CD8-positive, alpha-beta T cell (primary cell): ENCODE measurements at regions of chr3 and their contacts with region 1.

Region 1: GRCh38 chr3:103067963-103068362 is 633.1 kb downstream of the ZPLD1 start:
- DNase-seq: no peak
- ATAC-seq: no peak
- H3K4me3 ChIP-seq: no peak overlapping the region
- H3K4me3 Mint-ChIP-seq: no peak overlapping the region
- H3K27ac ChIP-seq: no peak overlapping the region
- H3K27ac Mint-ChIP-seq: no peak overlapping the region
- H3K4me1 ChIP-seq: no peaks in the 10 kb centered on the region
- H3K4me1 Mint-ChIP-seq: no peaks in the 10 kb centered on the region
- H3K27me3 ChIP-seq: no peaks in the 10 kb centered on the region
- H3K27me3 Mint-ChIP-seq: no peaks in the 10 kb centered on the region
- CTCF ChIP-seq: no peak

Region 2: DNA sequence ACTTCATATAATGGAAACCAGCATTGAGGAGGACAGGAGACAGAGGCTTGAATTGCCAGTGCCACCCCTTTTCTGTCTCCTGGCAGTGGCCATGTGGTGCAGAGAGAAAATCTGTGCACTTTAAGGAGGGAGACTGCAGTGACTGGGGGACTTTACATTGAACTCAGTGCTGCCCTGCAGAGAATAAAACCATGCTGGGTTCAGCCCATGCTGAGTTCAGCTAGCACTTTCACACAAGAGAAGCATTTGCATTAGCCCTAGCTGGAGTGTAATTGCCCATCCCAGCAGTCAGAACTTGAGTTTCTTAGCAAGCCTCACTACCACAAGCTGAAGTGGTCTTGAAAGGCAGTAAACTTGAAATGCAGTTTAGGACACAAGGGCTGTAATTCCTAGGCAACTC is 44.3 kb after region 1 on chr3:
- CTCF ChIA-PET with region 1: no interaction called
- POLR2A ChIA-PET with region 1: no interaction called
- intact Hi-C with region 1: no loop called
- DNase-seq: no peak
- ATAC-seq: no peak
- H3K4me3 ChIP-seq: no peak overlapping the region
- H3K4me3 Mint-ChIP-seq: no peak overlapping the region
- H3K27ac ChIP-seq: no peak overlapping the region
- H3K27ac Mint-ChIP-seq: no peak overlapping the region
- H3K4me1 ChIP-seq: no peaks in the 10 kb centered on the region
- H3K4me1 Mint-ChIP-seq: no peaks in the 10 kb centered on the region
- H3K27me3 ChIP-seq: no peaks in the 10 kb centered on the region
- H3K27me3 Mint-ChIP-seq: no peaks in the 10 kb centered on the region
- CTCF ChIP-seq: no peak

Region 3: GRCh38 chr3:104392327-104392726 is 1324.4 kb after region 1 on chr3:
- CTCF ChIA-PET with region 1: no interaction called
- POLR2A ChIA-PET with region 1: no interaction called
- intact Hi-C with region 1: loop called in 1 of 2 experiments (anchors 5 kb)
- DNase-seq: no peak
- ATAC-seq: no peak
- H3K4me3 ChIP-seq: no peak overlapping the region
- H3K4me3 Mint-ChIP-seq: no peak overlapping the region
- H3K27ac ChIP-seq: no peak overlapping the region
- H3K27ac Mint-ChIP-seq: no peak overlapping the region
- H3K4me1 ChIP-seq: no peaks in the 10 kb centered on the region
- H3K4me1 Mint-ChIP-seq: no peaks in the 10 kb centered on the region
- H3K27me3 ChIP-seq: no peaks in the 10 kb centered on the region
- H3K27me3 Mint-ChIP-seq: no peaks in the 10 kb centered on the region
- CTCF ChIP-seq: no peak